A673 (cell line): ENCODE measurements at regions of chr18 and their contacts with region 1.

Region 1: GRCh38 chr18:69727912-69728572 is 219.6 kb downstream of the CD226 start:
- DNase-seq: no peak
- H3K4me3 ChIP-seq: no peak overlapping the region
- H3K27ac ChIP-seq: no peak overlapping the region
- H3K4me1 ChIP-seq: peaks cover 4% of the 10 kb centered on the region
- H3K27me3 ChIP-seq: no peaks in the 10 kb centered on the region
- CTCF ChIP-seq: no peak

Region 2: GRCh38 chr18:69291044-69291443 is 437.0 kb before region 1 on chr18:
- CTCF ChIA-PET with region 1: no interaction called
- POLR2A ChIA-PET with region 1: no interaction called
- intact Hi-C with region 1: no loop called
- DNase-seq: no peak
- H3K4me3 ChIP-seq: no peak overlapping the region
- H3K27ac ChIP-seq: no peak overlapping the region
- H3K4me1 ChIP-seq: no peaks in the 10 kb centered on the region
- H3K27me3 ChIP-seq: no peaks in the 10 kb centered on the region
- CTCF ChIP-seq: no peak

Region 3: DNA sequence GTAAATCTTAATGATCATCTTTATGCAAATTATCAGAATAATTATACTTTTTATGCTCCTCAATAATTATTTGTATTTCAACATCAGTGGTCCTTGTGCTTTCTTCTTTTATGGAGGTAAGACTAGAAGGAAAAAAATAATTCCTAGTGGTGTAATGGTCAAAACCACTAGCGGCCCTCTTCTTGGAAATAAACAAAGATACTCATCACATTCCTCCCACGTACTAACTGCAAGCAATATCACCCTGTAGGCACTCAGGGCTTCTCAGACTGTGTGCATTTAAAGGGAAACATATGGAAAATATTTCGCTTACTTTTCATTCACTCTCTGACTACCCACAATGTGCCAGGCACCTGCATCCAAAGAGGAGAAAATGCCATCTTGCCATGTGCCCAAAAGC is 63.6 kb before region 1 on chr18:
- CTCF ChIA-PET with region 1: no interaction called
- POLR2A ChIA-PET with region 1: no interaction called
- intact Hi-C with region 1: loop called (anchors 10 kb)
- DNase-seq: no peak
- H3K4me3 ChIP-seq: no peak overlapping the region
- H3K27ac ChIP-seq: no peak overlapping the region
- H3K4me1 ChIP-seq: peaks cover 4% of the 10 kb centered on the region
- H3K27me3 ChIP-seq: no peaks in the 10 kb centered on the region
- CTCF ChIP-seq: no peak